WTC11 (cell line): ENCODE measurements at regions of chr15 and their contacts with region 1.

Region 1: DNA sequence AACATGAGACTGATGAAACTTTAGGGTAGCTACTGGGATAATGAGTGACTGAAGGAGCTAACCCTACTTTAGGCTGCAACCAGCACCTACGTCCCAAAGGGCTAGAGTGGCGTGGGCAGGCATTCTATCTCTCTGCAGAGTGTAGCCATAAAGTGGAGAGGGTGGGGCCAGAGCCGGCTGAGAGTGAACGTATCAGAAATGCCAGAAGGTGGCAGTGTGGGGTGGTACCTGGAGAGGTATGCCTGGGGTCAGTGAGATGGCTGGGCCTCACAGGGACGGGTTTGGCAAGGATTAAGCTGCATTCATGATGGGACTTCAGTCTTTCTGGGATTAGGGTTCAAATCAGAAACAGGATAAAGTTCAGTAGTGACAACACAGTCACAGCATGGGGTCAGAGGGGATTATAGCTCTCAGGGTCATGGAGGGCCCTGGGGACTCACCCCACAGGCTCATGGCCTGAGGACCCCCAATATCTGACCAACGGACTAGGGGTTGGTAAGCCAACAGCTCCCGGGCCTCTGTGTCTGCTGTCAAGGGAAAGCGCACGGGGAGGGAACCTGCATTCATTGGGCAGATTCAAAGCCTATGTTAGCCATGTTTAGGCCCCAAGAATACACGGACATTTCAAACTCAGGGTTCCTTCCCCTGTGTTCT is 86.5 kb upstream of the FOXB1 start:
- DNase-seq: peak; percentile 90
- ATAC-seq: peak; percentile 100
- H3K4me3 Mint-ChIP-seq: no peak overlapping the region
- H3K27ac Mint-ChIP-seq: no peak overlapping the region
- H3K4me1 Mint-ChIP-seq: peaks cover 40% of the 10 kb centered on the region
- H3K27me3 Mint-ChIP-seq: peaks cover 3% of the 10 kb centered on the region; the same call in 1 of the 2 replicates
- CTCF ChIP-seq: peak; percentile 51

Region 2: GRCh38 chr15:59751552-59752413 is 165.8 kb before region 1 on chr15:
- CTCF ChIA-PET with region 1: interaction called, 11 read pairs
- POLR2A ChIA-PET with region 1: no interaction called
- DNase-seq: no peak
- ATAC-seq: peak; percentile 100
- H3K4me3 Mint-ChIP-seq: no peak overlapping the region
- H3K27ac Mint-ChIP-seq: no peak overlapping the region
- H3K4me1 Mint-ChIP-seq: no peaks in the 10 kb centered on the region; the same call in none of the 2 replicates
- H3K27me3 Mint-ChIP-seq: no peaks in the 10 kb centered on the region
- CTCF ChIP-seq: peak; percentile 30; the same call in 1 of the 2 replicates

Region 3: GRCh38 chr15:59946084-59946483 is 28.5 kb after region 1 on chr15:
- CTCF ChIA-PET with region 1: interaction called, 13 read pairs
- POLR2A ChIA-PET with region 1: no interaction called
- DNase-seq: no peak
- ATAC-seq: no peak
- H3K4me3 Mint-ChIP-seq: no peak overlapping the region
- H3K27ac Mint-ChIP-seq: no peak overlapping the region
- H3K4me1 Mint-ChIP-seq: peaks cover 23% of the 10 kb centered on the region
- H3K27me3 Mint-ChIP-seq: no peaks in the 10 kb centered on the region; the same call in 1 of the 2 replicates
- CTCF ChIP-seq: no peak

Region 4: GRCh38 chr15:59997070-59997701 is 79.6 kb after region 1 on chr15:
- CTCF ChIA-PET with region 1: interaction called, 42 read pairs
- POLR2A ChIA-PET with region 1: no interaction called
- DNase-seq: peak; percentile 96
- ATAC-seq: peak; percentile 45
- H3K4me3 Mint-ChIP-seq: peak overlapping the region; percentile 87
- H3K27ac Mint-ChIP-seq: peak overlapping the region; percentile 99
- H3K4me1 Mint-ChIP-seq: peaks cover 75% of the 10 kb centered on the region
- H3K27me3 Mint-ChIP-seq: peaks cover 12% of the 10 kb centered on the region
- CTCF ChIP-seq: no peak

Region 5: GRCh38 chr15:60118146-60118545 is 200.5 kb after region 1 on chr15:
- CTCF ChIA-PET with region 1: interaction called, 13 read pairs
- POLR2A ChIA-PET with region 1: no interaction called
- DNase-seq: peak; percentile 23
- ATAC-seq: peak; percentile 72
- H3K4me3 Mint-ChIP-seq: peak overlapping the region; percentile 63
- H3K27ac Mint-ChIP-seq: peak overlapping the region; percentile 96
- H3K4me1 Mint-ChIP-seq: peaks cover 78% of the 10 kb centered on the region
- H3K27me3 Mint-ChIP-seq: peaks cover 37% of the 10 kb centered on the region
- CTCF ChIP-seq: no peak

Region 6: GRCh38 chr15:60179786-60180391 is 262.3 kb after region 1 on chr15:
- CTCF ChIA-PET with region 1: interaction called, 18 read pairs
- POLR2A ChIA-PET with region 1: no interaction called
- DNase-seq: no peak
- ATAC-seq: peak; percentile 71
- H3K4me3 Mint-ChIP-seq: no peak overlapping the region
- H3K27ac Mint-ChIP-seq: no peak overlapping the region
- H3K4me1 Mint-ChIP-seq: peaks cover 17% of the 10 kb centered on the region
- H3K27me3 Mint-ChIP-seq: no peaks in the 10 kb centered on the region
- CTCF ChIP-seq: peak; percentile 70